ENCODE measurements at regions of chr6 and their contacts with region 1.

Region 1: GRCh38 chr6:53064726-53065215 is 433 bp upstream of the FBXO9 start:
- DNase-seq: peak; percentile 97
- H3K4me3 Mint-ChIP-seq: peak overlapping the region; percentile 99
- H3K27ac Mint-ChIP-seq: peak overlapping the region; percentile 96
- H3K4me1 Mint-ChIP-seq: peaks cover 61% of the 10 kb centered on the region
- H3K27me3 Mint-ChIP-seq: no peaks in the 10 kb centered on the region

Region 2: DNA sequence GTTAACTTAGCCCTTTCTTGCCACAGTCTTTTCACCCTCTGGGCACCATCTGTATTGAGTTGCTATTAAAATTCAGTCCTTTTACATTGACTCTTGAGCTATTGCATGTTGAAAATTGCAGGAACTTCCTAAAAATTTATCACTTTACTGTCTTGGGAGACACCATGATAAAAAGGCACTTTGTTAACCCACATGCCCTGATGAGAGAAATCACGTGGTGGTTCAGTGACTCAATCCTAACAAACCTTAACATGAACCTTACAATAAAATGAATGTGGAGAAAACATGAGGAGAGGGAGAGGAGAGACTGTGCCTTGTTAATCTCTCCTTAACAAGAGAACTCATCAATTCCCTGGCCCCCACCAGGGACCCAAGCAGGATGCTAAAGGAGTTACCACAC is 100.5 kb before region 1 on chr6:
- CTCF ChIA-PET with region 1: no interaction called
- POLR2A ChIA-PET with region 1: no interaction called
- DNase-seq: no peak
- H3K4me3 Mint-ChIP-seq: no peak overlapping the region
- H3K27ac Mint-ChIP-seq: no peak overlapping the region
- H3K4me1 Mint-ChIP-seq: no peaks in the 10 kb centered on the region
- H3K27me3 Mint-ChIP-seq: no peaks in the 10 kb centered on the region

Region 3: GRCh38 chr6:53033764-53034163 is 31.0 kb before region 1 on chr6:
- CTCF ChIA-PET with region 1: no interaction called
- POLR2A ChIA-PET with region 1: no interaction called
- DNase-seq: no peak
- H3K4me3 Mint-ChIP-seq: no peak overlapping the region
- H3K27ac Mint-ChIP-seq: no peak overlapping the region
- H3K4me1 Mint-ChIP-seq: peaks cover 4% of the 10 kb centered on the region
- H3K27me3 Mint-ChIP-seq: no peaks in the 10 kb centered on the region

Region 4: GRCh38 chr6:53048431-53049195 is 16.2 kb before region 1 on chr6:
- CTCF ChIA-PET with region 1: interaction called, 5 read pairs
- POLR2A ChIA-PET with region 1: interaction called, 10 read pairs
- DNase-seq: peak; percentile 21
- H3K4me3 Mint-ChIP-seq: peak overlapping the region; percentile 58
- H3K27ac Mint-ChIP-seq: peak overlapping the region; percentile 63
- H3K4me1 Mint-ChIP-seq: peaks cover 26% of the 10 kb centered on the region
- H3K27me3 Mint-ChIP-seq: no peaks in the 10 kb centered on the region

Measured in activated CD4-positive, alpha-beta memory T cell treated with anti-CD3 and anti-CD28 coated beads, Interleukin-2, amount 10 ng/mL, durations not matched to agents 7 days and 5 days (primary cell).